Lower leg skin (tissue), 4 donors: ENCODE measurements at regions of chr2 and their contacts with region 1.

Region 1: GRCh38 chr2:24754985-24755705 is 38.0 kb downstream of the PTRHD1 start:
- DNase-seq: no peak
- H3K4me3 ChIP-seq: no peak overlapping the region
- CTCF ChIP-seq: no peak
- POLR2A ChIP-seq: no peak

Region 2: DNA sequence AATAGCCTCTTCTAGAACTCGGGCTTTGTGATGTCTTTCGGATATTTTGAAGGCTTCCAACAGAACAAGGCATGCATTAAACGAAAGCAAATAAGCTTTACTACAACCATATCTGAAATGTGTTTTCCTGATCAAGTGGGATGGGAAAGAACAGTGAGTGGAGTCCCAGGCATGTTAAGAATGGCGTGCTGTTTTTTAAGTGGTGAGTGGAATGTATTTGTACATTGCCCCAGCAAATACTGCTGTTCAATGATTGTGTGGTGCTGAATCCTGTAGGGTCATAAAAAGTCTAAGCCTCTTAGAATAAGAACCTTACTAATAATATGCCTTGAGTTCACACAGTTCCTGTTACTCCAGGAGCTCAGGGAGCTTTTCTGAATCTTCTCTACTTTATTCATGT is 360.8 kb after region 1 on chr2:
- intact Hi-C with region 1: loop called (anchors 5 kb)
- DNase-seq: no peak
- H3K4me3 ChIP-seq: no peak overlapping the region
- CTCF ChIP-seq: no peak
- POLR2A ChIP-seq: no peak

Region 3: DNA sequence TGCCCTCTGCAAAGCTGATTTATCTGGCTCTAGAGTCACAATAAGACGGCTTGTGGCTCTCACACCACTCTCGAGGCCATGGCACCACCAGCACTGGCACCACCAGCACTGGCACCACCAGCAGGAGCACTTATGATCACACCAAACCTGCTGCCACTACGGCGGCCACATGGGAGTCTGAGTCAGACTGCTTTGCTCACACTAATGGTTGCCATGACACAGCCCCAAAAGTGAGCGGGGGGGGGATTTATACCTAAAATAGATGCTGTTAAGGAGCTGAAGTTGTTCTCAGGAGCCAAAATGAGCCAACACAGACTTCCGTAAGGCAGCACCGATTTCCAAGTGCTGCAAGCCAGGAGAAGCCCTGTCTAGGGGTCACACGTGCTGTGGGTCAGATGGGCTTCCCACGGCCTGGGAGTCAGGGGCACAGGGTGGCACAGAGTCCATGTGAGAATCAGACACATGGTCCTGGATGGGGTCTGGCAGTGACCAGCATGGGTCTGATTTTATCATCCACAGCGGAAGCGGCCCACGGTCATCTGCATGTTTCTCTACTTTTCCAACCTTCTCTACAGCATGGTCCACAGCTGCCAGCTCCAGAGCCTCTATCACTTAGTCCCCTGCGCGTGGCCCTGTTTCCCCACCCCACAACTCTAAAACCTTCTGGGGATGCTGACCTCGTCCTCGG is 569.9 kb after region 1 on chr2:
- intact Hi-C with region 1: no loop called
- DNase-seq: no peak
- H3K4me3 ChIP-seq: no peak overlapping the region
- CTCF ChIP-seq: no peak
- POLR2A ChIP-seq: no peak

Region 4: DNA sequence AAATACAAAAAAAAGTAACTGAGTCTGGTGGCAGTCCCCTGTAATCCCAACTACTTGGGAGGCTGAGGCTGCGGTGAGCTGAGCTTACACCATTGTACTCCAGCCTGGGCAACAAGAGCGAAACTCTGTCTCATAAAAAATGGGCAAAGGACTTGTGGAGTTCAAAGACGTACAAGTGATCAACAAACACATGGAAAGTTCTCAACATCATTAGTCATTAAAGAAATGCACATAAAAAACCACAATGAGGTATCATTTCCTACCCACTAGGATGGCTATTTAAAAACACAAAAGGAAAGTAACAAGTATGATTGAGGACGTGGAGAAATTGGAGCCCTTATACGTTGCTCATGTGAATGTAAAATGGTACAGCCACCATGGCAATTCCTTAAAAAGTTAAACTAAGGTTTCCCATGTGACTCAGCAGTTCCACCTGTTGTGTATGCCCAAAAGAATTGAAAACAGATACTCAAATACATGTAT is 1331.1 kb after region 1 on chr2:
- intact Hi-C with region 1: no loop called
- DNase-seq: no peak
- H3K4me3 ChIP-seq: no peak overlapping the region
- CTCF ChIP-seq: no peak
- POLR2A ChIP-seq: no peak